Common myeloid progenitor, CD34-positive (primary cell): ENCODE measurements at regions of chr17 and their contacts with region 1.

Region 1: GRCh38 chr17:42061646-42062487 is 11.5 kb upstream of the C17orf113 start:
- DNase-seq: no peak
- H3K4me3 ChIP-seq: no peak overlapping the region
- H3K27ac ChIP-seq: no peak overlapping the region
- H3K4me1 ChIP-seq: peaks cover 0 to 50% (median 28%) of the 10 kb centered on the region in 4 experiments
- H3K27me3 ChIP-seq: no peaks in the 10 kb centered on the region

Region 2: DNA sequence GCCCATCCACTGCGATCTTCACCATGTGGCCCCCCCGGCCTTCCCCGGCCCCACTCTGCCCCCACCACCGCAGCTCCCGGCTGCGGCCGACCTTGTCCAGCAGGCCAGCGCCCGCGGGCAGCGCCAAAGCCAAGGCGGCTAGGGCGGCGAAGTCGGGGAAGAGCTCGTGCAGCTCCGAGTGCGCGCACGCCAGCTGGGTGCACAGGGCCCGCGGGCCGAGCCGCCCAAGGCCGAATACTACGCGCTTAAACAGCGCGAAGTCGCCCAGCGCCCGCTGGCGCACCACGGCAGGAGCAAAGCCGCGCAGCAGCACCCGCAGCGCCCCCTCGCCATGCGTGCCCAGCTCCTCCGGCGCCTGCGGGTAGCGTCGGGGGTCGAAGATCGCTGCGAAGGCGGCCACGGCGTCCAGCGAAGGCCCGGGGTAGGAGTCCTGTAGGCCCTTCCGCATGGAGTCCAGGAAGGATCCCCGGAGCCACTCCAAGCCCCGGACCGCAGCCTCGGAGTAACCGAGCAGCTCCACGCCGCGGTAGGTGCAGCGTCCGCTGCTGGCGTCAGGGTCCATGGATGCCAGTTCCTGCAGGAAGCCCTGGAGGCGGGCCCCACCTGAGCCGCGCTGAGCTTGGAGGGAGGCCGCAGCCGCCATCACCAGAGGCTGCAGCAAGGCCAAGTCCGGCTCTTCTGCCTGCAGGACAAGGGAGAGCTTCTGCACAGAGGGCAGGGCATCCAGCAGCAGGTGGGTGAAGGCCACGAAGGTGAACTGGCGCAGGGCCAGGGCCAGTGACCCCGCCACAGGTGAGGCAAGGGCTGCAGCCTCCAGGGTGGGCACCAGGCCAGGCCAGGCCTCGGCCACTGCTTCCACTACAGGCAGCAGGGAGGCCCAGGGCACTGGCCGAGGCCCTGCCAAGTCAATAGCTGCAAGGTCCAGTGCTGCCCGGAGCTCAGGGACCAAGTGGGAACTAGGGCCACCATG is 21.8 kb before region 1 on chr17:
- CTCF ChIA-PET with region 1: interaction called, 12 read pairs
- POLR2A ChIA-PET with region 1: interaction called, 4 read pairs
- DNase-seq: peak in 2 of 3 donors; percentile 35 to 48
- H3K4me3 ChIP-seq: peak overlapping the region in 3 of 7 experiments; percentile 50 to 60 (median 55)
- H3K27ac ChIP-seq: no peak overlapping the region
- H3K4me1 ChIP-seq: peaks cover 0 to 11% (median 5%) of the 10 kb centered on the region in 4 experiments
- H3K27me3 ChIP-seq: no peaks in the 10 kb centered on the region